Activated naive CD4-positive, alpha-beta T cell treated with anti-CD3 and anti-CD28 coated beads for 36 hours (primary cell): ENCODE measurements at regions of chr7 and their contacts with region 1.

Region 1: GRCh38 chr7:30348083-30348560 is 63.7 kb downstream of the ZNRF2 start:
- DNase-seq: peak; percentile 67
- H3K4me3 Mint-ChIP-seq: peak overlapping the region; percentile 50
- H3K27ac Mint-ChIP-seq: peak overlapping the region; percentile 86
- H3K4me1 Mint-ChIP-seq: peaks cover 52% of the 10 kb centered on the region
- H3K27me3 Mint-ChIP-seq: no peaks in the 10 kb centered on the region

Region 2: GRCh38 chr7:30134611-30135545 is 213.2 kb before region 1 on chr7 and contains the start of gene MTURN:
- CTCF ChIA-PET with region 1: no interaction called
- intact Hi-C with region 1: loop called (anchors 5 kb)
- DNase-seq: peak; percentile 83
- H3K4me3 Mint-ChIP-seq: peak within 1 kb of the TSS; percentile 87
- H3K27ac Mint-ChIP-seq: peak within 1 kb of the TSS; percentile 56
- H3K4me1 Mint-ChIP-seq: no peaks in the 10 kb centered on the region
- H3K27me3 Mint-ChIP-seq: no peaks in the 10 kb centered on the region
- total RNA-seq, gene MTURN: 5.1 to 6.3 TPM

Region 3: GRCh38 chr7:30276203-30276900 is 71.8 kb before region 1 on chr7:
- CTCF ChIA-PET with region 1: interaction called, 17 read pairs
- intact Hi-C with region 1: loop called (anchors 1 kb)
- DNase-seq: peak; percentile 75
- H3K4me3 Mint-ChIP-seq: no peak overlapping the region
- H3K27ac Mint-ChIP-seq: no peak overlapping the region
- H3K4me1 Mint-ChIP-seq: peaks cover 5% of the 10 kb centered on the region
- H3K27me3 Mint-ChIP-seq: no peaks in the 10 kb centered on the region

Region 4: DNA sequence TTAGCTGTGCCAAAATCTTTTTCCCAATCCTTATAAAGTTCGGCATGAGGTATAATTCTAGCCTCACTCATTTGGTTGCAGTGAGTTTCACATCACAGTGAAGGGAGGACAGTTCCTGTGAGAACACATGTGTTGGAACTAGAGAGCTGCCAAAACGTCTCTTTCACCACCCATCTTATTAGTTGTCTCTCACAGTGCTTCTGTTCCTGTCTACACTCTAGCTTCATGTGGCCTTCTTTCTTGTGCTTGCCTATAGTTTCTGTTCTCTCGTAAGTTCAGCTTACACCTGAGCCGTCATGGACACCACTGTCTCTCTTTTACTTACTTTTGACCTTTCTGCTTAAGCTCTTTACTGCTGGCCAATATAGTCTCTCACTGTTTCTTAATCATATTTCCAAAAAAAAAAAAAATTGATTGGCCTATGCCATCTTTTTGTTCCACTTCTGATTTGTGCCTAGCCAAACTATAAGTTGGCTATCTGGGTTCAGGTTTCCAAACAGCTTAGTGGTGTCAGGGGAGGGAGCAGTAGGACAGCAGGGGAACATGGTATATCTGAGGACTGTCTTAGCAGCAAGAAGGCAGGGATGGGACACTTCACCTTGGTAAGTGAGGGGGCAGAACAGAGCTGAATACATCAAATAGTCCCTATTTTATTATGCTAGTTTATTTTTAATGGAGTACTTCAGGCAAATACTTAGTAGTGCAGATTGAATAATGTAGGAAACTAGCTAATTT is 25.7 kb before region 1 on chr7:
- CTCF ChIA-PET with region 1: interaction called, 18 read pairs
- intact Hi-C with region 1: loop called (anchors 1 kb)
- DNase-seq: peak; percentile 40
- H3K4me3 Mint-ChIP-seq: peak overlapping the region; percentile 78
- H3K27ac Mint-ChIP-seq: peak overlapping the region; percentile 92
- H3K4me1 Mint-ChIP-seq: peaks cover 62% of the 10 kb centered on the region
- H3K27me3 Mint-ChIP-seq: no peaks in the 10 kb centered on the region

Region 5: DNA sequence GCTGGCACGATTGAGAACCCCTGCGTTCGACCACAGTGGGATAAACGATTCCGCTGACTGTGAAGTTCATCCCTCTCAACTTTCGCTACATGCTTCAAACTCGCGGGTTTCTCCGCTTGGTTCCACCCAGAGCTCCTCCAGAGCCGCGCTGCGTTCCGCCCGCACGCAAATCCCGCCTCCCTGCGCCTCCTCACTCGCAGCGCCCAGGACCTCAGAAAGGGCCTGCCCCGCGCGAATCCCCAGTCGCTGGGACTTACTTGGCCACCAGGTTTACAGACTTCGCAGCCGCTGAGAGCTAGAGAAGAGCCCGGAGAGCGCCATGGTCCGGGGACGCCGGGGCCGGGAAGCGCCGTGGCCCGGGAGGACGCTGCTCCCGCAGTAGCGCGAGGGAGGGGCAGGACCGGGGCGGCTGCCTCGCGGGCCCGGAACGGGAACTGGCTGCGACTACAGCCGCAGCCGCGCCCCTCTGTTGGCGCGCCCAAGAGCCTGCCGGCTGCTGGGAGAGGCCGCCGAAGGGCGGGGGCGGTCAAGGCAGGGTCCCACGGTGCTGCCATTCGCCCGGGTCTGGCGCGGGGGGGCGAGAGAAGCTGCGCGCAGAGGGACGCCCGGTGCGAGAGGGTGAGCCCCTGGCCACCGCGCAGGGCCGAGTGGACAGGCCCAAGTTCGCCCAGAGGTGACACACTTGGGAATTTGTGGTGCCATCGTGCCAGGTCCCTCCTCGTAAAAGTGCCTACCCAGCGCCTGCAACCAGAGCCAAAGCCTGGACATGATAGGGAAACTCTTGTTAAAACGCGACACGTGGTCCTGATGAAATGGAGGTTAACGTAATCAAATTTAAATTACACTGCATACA is 130.5 kb after region 1 on chr7 and contains the start of gene NOD1:
- CTCF ChIA-PET with region 1: no interaction called
- intact Hi-C with region 1: loop called (anchors 1 kb)
- DNase-seq: peak; percentile 73
- H3K4me3 Mint-ChIP-seq: peak within 1 kb of the TSS; percentile 89
- H3K27ac Mint-ChIP-seq: peak within 1 kb of the TSS; percentile 87
- H3K4me1 Mint-ChIP-seq: peaks cover 52% of the 10 kb centered on the region
- H3K27me3 Mint-ChIP-seq: no peaks in the 10 kb centered on the region
- total RNA-seq, gene NOD1: 9.2 to 9.8 TPM

Region 6: GRCh38 chr7:30727061-30727945 is 379.2 kb after region 1 on chr7:
- CTCF ChIA-PET with region 1: no interaction called
- intact Hi-C with region 1: loop called (anchors 5 kb)
- DNase-seq: peak; percentile 75
- H3K4me3 Mint-ChIP-seq: peak overlapping the region; percentile 77
- H3K27ac Mint-ChIP-seq: peak overlapping the region; percentile 89
- H3K4me1 Mint-ChIP-seq: peaks cover 54% of the 10 kb centered on the region
- H3K27me3 Mint-ChIP-seq: no peaks in the 10 kb centered on the region